H1 (cell line): ENCODE measurements at regions of chr19 and their contacts with region 1.

Region 1: DNA sequence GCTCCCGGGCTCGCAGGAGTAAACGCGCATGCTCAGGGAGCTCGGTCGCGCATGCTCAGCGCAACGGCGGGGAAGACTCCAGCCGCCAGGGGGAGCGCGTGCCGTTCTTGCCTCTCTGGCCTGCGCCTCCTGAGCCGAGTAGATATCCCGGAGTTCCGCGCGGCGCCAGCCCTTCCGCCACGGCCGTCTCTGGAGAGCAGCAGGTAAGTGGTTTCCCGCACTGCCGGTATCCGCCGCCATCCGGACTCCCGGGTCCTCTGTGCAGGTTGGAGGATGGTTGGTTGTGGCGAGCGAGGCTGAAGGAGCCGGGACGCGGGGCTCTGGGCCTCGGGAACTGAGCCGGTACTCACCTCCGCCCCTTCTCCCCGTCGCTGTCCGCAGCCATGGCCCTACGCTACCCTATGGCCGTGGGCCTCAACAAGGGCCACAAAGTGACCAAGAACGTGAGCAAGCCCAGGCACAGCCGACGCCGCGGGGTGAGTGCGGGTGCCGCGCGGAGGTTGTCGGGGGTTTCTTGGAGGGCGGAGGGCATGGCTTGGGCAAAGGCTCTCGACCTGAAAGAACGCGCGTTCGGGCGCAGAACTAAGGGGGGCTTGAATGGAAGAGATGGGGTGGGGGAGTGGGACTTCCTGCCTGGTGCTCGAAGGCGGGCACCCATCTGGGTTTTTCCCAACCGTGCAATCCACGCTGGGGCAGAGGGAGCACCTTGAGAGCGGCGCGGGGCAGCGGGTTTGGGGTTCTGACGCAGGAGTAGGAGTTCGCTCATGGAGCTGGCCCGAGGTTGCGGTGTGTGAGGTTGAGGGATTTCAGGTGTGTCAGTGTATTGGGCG is at the start of gene RPL36:
- DNase-seq: peak; percentile 90 to 100
- H3K4me3 ChIP-seq: peak within 1 kb of the TSS; percentile 64 to 99 (median 83)
- H3K27ac ChIP-seq: peak within 1 kb of the TSS; percentile 89
- H3K4me1 ChIP-seq: peaks cover 0 to 4% (median 1%) of the 10 kb centered on the region in 4 experiments; a peak in 3 of 7 replicates
- H3K27me3 ChIP-seq: no peaks in the 10 kb centered on the region
- CTCF ChIP-seq: peak; percentile 93 to 100 (median 99)
- EP300 ChIP-seq: no peak; a peak in 1 of 3 replicates
- POLR2A ChIP-seq: peak; percentile 97 to 99
- RAD21 ChIP-seq: peak; percentile 27 to 33; a peak in 3 of 4 replicates
- total RNA-seq, gene RPL36: 1,075 and 1,137 TPM in 2 replicates

Region 2: DNA sequence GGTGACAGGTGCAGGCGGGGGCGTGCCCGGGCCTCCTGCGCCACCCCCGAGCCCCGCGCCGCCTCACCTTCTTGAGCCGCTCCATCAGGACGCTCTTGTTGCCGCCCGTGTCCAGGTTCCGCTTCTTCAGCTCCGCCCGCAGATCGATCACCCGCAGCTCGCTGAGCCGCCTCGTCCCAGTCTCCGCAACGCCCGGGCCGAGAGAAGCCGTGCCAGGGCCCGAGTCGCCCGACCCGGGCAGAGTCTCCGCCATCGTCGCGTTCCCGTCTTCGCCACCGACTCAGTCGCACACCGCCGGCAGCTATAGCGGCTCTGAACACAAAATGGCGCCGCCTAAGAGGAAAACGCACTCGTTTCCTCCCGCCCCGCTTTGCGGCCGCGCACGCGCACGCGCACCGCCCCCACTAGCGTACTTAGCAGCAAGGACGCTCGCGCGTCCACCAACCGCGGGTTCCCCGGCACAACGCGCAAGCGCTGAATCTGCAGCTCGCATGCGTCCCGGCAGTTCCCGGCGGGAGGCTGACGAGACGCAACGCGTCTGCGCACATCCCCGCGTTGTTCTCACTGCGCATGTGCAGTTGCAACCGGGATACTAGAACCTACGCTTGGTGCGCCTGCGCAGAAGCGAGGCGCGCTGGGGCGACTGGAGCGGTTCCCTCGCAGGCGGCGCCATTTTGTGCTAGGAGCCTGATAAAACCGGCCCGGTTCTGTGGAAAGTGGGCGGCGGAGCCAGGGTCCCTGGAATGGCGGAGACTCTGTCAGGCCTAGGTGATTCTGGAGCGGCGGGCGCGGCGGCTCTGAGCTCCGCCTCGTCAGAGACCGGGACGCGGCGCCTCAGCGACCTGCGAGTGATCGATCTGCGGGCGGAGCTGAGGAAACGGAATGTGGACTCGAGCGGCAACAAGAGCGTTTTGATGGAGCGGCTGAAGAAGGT is 67.6 kb before region 1 on chr19 and contains the starts of genes SAFB and SAFB2:
- CTCF ChIA-PET with region 1: interaction called, 8 read pairs
- POLR2A ChIA-PET with region 1: interaction called, 25 read pairs
- DNase-seq: peak; percentile 98 to 100
- H3K4me3 ChIP-seq: peak within 1 kb of the TSS; percentile 88 to 100 (median 98)
- H3K27ac ChIP-seq: peak within 1 kb of the TSS; percentile 97
- H3K4me1 ChIP-seq: peaks cover 2 to 14% (median 6%) of the 10 kb centered on the region in 4 experiments; a peak in 4 of 7 replicates
- H3K27me3 ChIP-seq: no peaks in the 10 kb centered on the region
- CTCF ChIP-seq: no peak
- EP300 ChIP-seq: no peak
- POLR2A ChIP-seq: peak; percentile 61 to 86; a peak in 2 of 3 replicates
- RAD21 ChIP-seq: no peak
- total RNA-seq, gene SAFB: 109 and 110 TPM in 2 replicates
- total RNA-seq, gene SAFB2: 63.8 and 74.4 TPM in 2 replicates

Region 3: DNA sequence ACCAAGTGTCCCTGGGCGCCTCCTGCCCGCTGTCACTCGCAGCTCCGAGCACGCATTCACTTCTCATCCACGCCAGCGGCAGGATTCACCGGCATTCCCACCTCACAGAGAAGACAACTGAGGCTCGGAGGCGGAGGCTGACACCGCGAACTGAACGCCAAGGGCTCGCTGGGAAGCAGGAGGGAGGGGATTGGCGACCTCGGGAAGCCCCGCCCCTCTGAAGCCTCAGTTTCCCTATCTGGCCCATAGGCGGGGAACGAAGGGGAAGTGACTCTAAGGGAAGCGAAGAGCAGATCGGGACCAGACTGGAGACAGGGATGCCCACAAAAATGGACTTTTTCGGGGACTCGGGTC is 10.3 kb before region 1 on chr19:
- CTCF ChIA-PET with region 1: interaction called, 26 read pairs
- POLR2A ChIA-PET with region 1: interaction called, 51 read pairs
- DNase-seq: no peak
- H3K4me3 ChIP-seq: peak overlapping the region; percentile 58 to 83 (median 76)
- H3K27ac ChIP-seq: peak overlapping the region; percentile 69; the same call in 1 of the 2 replicates
- H3K4me1 ChIP-seq: peaks cover 0 to 14% (median 0%) of the 10 kb centered on the region in 4 experiments; a peak in 5 of 7 replicates
- H3K27me3 ChIP-seq: no peaks in the 10 kb centered on the region
- CTCF ChIP-seq: no peak
- EP300 ChIP-seq: no peak
- POLR2A ChIP-seq: no peak
- RAD21 ChIP-seq: no peak

Region 4: DNA sequence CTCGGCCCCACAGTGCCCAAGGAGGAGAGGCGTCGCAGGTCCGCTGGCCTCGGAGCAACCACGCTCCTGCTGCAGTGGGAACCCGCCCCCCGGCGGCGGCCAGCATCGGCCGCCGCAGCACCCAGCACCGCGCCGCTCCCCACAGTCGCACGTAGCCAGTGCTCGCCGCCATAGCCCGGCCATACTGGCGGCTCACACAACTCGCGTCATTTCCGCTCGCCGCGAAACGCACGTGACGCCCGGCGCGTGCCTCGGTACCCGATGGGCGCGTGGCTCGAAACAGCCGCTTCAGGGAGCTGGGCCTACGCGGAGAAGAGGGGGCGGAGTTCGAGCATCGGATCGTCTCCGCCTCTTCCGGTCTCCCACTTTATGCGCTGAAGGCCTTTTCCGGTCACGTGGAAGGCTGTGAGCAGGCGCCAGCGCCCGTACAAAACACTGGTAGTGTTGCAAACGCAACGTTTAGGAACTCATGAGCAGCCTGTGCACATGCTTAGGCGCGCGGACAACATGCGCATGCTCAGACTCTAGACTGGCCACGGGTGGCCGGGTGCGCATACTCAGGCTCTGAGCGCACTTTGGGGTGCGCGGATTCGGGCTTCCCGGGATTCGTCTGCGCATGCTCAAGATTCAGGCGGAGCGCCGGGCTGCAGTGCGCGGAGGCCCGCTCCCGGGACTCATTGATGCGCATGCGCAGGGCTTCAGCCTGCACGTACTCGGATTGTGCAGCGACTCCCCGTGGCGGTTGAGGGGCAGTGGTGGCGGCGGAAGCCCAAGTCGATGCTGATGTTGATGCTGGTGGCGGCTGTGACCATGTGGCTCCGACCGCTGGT is 29.8 kb after region 1 on chr19 and contains the starts of genes CATSPERD and LONP1:
- CTCF ChIA-PET with region 1: interaction called, 17 read pairs
- POLR2A ChIA-PET with region 1: interaction called, 620 read pairs
- DNase-seq: peak; percentile 95 to 98
- H3K4me3 ChIP-seq: peak within 1 kb of the TSS; percentile 71 to 100 (median 98)
- H3K27ac ChIP-seq: peak within 1 kb of the TSS; percentile 97
- H3K4me1 ChIP-seq: no peaks in the 10 kb centered on the region; a peak in 2 of 7 replicates
- H3K27me3 ChIP-seq: no peaks in the 10 kb centered on the region
- CTCF ChIP-seq: peak; percentile 78 to 94 (median 91)
- EP300 ChIP-seq: peak in 1 of 2 experiments; percentile 59; a peak in 1 of 3 replicates
- POLR2A ChIP-seq: peak; percentile 85 to 91
- RAD21 ChIP-seq: peak in 1 of 2 experiments; percentile 33; a peak in 2 of 4 replicates
- total RNA-seq, gene CATSPERD: not detected in 2 replicates
- total RNA-seq, gene LONP1: 117 and 124 TPM in 2 replicates

Region 5: GRCh38 chr19:5775668-5776309 is 85.4 kb after region 1 on chr19:
- CTCF ChIA-PET with region 1: interaction called, 3 read pairs
- POLR2A ChIA-PET with region 1: interaction called, 24 read pairs
- DNase-seq: no peak
- H3K4me3 ChIP-seq: no peak overlapping the region
- H3K27ac ChIP-seq: no peak overlapping the region
- H3K4me1 ChIP-seq: no peaks in the 10 kb centered on the region
- H3K27me3 ChIP-seq: no peaks in the 10 kb centered on the region; a peak in 2 of 7 replicates
- CTCF ChIP-seq: no peak
- EP300 ChIP-seq: no peak
- POLR2A ChIP-seq: no peak
- RAD21 ChIP-seq: no peak